Caco-2 (cell line): ENCODE measurements at regions of chr10 and their contacts with region 1.

Region 1: DNA sequence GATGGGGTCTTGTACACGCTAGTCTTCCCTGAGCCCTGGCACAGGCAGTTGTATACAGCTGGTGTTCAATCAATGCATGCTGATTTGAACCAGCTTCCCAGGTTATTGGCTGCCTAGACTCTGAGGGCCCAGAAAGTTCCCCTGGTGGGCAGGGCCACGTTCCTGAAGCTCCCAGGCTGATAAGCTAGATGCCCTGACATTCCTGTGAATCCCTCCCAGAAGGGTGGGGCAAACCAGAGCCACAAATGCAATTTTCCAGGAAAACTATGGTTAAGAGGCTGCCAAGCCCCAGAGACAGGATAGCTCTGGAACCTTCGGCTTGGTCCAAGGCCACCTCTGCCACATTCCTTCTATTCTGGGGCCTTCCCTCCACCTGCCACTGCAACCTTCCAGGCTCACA is 78.2 kb downstream of the FAM53B start:
- DNase-seq: peak; percentile 20 to 48
- H3K4me3 ChIP-seq: no peak overlapping the region
- H3K4me3 Mint-ChIP-seq: no peak overlapping the region
- H3K27ac Mint-ChIP-seq: no peak overlapping the region
- H3K4me1 ChIP-seq: peaks cover 25% of the 10 kb centered on the region
- H3K4me1 Mint-ChIP-seq: peaks cover 8% of the 10 kb centered on the region
- H3K27me3 ChIP-seq: no peaks in the 10 kb centered on the region
- H3K27me3 Mint-ChIP-seq: no peaks in the 10 kb centered on the region
- CTCF ChIP-seq: no peak

Region 2: GRCh38 chr10:124530215-124530665 is 135.7 kb before region 1 on chr10:
- CTCF ChIA-PET with region 1: no interaction called
- POLR2A ChIA-PET with region 1: no interaction called
- intact Hi-C with region 1: loop called (anchors 5 kb)
- DNase-seq: peak; percentile 84 to 88
- H3K4me3 ChIP-seq: no peak overlapping the region
- H3K4me3 Mint-ChIP-seq: no peak overlapping the region
- H3K27ac Mint-ChIP-seq: no peak overlapping the region
- H3K4me1 ChIP-seq: no peaks in the 10 kb centered on the region
- H3K4me1 Mint-ChIP-seq: no peaks in the 10 kb centered on the region
- H3K27me3 ChIP-seq: no peaks in the 10 kb centered on the region
- H3K27me3 Mint-ChIP-seq: no peaks in the 10 kb centered on the region
- CTCF ChIP-seq: peak; percentile 89 to 97

Region 3: GRCh38 chr10:124685261-124685660 is 19.3 kb after region 1 on chr10:
- CTCF ChIA-PET with region 1: no interaction called
- POLR2A ChIA-PET with region 1: no interaction called
- intact Hi-C with region 1: no loop called
- DNase-seq: no peak
- H3K4me3 ChIP-seq: no peak overlapping the region
- H3K4me3 Mint-ChIP-seq: no peak overlapping the region
- H3K27ac Mint-ChIP-seq: no peak overlapping the region
- H3K4me1 ChIP-seq: no peaks in the 10 kb centered on the region
- H3K4me1 Mint-ChIP-seq: no peaks in the 10 kb centered on the region
- H3K27me3 ChIP-seq: no peaks in the 10 kb centered on the region
- H3K27me3 Mint-ChIP-seq: no peaks in the 10 kb centered on the region
- CTCF ChIP-seq: no peak

Region 4: DNA sequence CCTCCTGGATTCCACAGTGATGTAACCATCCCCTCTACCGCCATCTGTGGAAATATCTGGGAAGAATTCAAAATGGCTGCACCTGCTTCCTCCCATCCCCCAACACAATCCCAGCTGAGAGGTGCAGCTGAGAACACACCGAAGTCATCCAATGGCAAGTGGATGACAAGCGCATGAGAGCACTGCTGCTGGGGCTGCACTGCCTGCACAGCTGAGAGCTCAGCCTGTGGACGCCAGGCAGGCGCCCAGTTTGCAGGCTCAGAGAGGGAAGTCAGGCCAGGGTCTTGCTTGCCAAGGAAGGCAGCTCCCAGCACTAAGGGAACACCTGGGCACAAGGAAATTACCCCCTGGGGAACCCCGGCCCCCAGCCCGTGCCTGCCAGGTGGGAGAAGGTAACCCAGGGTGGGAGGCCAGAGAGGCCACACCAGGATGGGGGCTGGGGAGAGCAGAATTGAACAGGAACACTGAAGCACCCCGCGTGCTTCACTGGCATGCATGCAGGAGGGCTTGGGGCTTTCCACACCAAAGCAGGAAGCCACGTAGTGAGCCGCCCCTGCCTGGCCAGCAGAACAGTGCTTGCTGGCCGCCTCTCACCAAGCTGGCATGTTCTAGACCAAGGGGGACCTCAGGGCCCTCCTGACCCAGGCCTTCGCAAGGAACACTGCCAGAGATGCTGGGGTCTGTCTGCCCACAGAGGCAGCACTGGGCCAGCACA is 32.0 kb after region 1 on chr10:
- CTCF ChIA-PET with region 1: no interaction called
- POLR2A ChIA-PET with region 1: no interaction called
- intact Hi-C with region 1: no loop called
- DNase-seq: peak in 1 of 2 experiments; percentile 24
- H3K4me3 ChIP-seq: no peak overlapping the region
- H3K4me3 Mint-ChIP-seq: no peak overlapping the region
- H3K27ac Mint-ChIP-seq: peak overlapping the region; percentile 24
- H3K4me1 ChIP-seq: peaks cover 14% of the 10 kb centered on the region; the same call in 1 of the 2 replicates
- H3K4me1 Mint-ChIP-seq: peaks cover 7% of the 10 kb centered on the region
- H3K27me3 ChIP-seq: no peaks in the 10 kb centered on the region
- H3K27me3 Mint-ChIP-seq: no peaks in the 10 kb centered on the region
- CTCF ChIP-seq: no peak